ENCODE measurements at regions of chr4 and their contacts with region 1.

Region 1: GRCh38 chr4:83503974-83504373 is 19.1 kb upstream of the ABRAXAS1 start:
- DNase-seq: peak; percentile 48
- ATAC-seq: no peak
- H3K4me3 Mint-ChIP-seq: no peak overlapping the region
- H3K27ac Mint-ChIP-seq: peak overlapping the region; percentile 30
- H3K4me1 Mint-ChIP-seq: peaks cover 15% of the 10 kb centered on the region
- H3K27me3 Mint-ChIP-seq: no peaks in the 10 kb centered on the region

Region 2: DNA sequence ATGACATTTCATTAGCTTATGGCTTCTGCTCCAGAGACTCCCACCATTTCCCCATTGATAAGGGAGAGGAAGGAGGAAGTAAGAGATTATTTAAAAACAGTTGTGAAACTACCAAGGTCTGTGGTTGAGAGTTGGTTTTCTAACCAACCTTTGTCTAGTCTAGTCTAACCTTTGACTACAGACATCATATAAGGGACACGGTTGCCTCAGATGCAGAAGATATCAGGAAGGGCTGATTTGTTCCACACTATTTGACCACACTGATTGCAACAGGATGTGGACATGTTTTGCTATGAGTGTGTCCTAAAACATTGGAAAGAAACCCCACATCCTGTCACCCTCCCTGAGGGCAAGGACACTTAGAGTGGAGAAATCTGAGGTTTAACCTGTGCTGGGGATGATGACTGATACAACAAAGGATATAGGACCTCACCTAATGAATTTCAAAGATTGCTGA is 272.3 kb before region 1 on chr4:
- CTCF ChIA-PET with region 1: no interaction called
- POLR2A ChIA-PET with region 1: no interaction called
- DNase-seq: peak; percentile 75
- ATAC-seq: peak; percentile 84
- H3K4me3 Mint-ChIP-seq: peak overlapping the region; percentile 24
- H3K27ac Mint-ChIP-seq: peak overlapping the region; percentile 65
- H3K4me1 Mint-ChIP-seq: peaks cover 66% of the 10 kb centered on the region
- H3K27me3 Mint-ChIP-seq: no peaks in the 10 kb centered on the region

Region 3: GRCh38 chr4:83436680-83437079 is 67.3 kb before region 1 on chr4:
- CTCF ChIA-PET with region 1: no interaction called
- POLR2A ChIA-PET with region 1: no interaction called
- DNase-seq: no peak
- ATAC-seq: no peak
- H3K4me3 Mint-ChIP-seq: no peak overlapping the region
- H3K27ac Mint-ChIP-seq: no peak overlapping the region
- H3K4me1 Mint-ChIP-seq: no peaks in the 10 kb centered on the region
- H3K27me3 Mint-ChIP-seq: no peaks in the 10 kb centered on the region

Region 4: GRCh38 chr4:83516042-83516772 is 12.2 kb after region 1 on chr4:
- CTCF ChIA-PET with region 1: no interaction called
- POLR2A ChIA-PET with region 1: no interaction called
- DNase-seq: no peak
- ATAC-seq: no peak
- H3K4me3 Mint-ChIP-seq: no peak overlapping the region
- H3K27ac Mint-ChIP-seq: no peak overlapping the region
- H3K4me1 Mint-ChIP-seq: no peaks in the 10 kb centered on the region
- H3K27me3 Mint-ChIP-seq: no peaks in the 10 kb centered on the region

Region 5: GRCh38 chr4:83582289-83582769 is 78.4 kb after region 1 on chr4:
- CTCF ChIA-PET with region 1: interaction called, 12 read pairs
- POLR2A ChIA-PET with region 1: no interaction called
- DNase-seq: no peak
- ATAC-seq: no peak
- H3K4me3 Mint-ChIP-seq: no peak overlapping the region
- H3K27ac Mint-ChIP-seq: no peak overlapping the region
- H3K4me1 Mint-ChIP-seq: no peaks in the 10 kb centered on the region
- H3K27me3 Mint-ChIP-seq: peaks cover 6% of the 10 kb centered on the region

Region 6: DNA sequence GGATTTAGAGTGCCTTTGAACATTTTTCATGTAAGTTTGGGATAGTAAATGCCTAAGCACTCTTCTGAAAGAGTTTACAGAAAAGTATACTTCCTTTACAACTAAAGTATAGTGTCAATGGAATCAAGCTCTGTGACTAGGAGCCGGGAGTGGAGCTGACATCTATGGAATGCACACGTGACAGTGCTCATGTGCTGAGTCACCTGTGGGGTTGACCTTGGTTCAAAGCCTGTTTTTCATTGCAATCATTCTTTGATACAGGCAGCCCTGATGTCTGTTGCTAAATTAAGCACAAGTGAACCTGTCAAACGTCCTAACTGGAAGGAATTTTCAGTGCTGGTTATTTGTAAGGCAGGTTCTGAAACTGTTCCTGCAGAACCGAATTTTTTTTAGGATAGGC is 114.5 kb after region 1 on chr4:
- CTCF ChIA-PET with region 1: no interaction called
- POLR2A ChIA-PET with region 1: no interaction called
- DNase-seq: no peak
- ATAC-seq: no peak
- H3K4me3 Mint-ChIP-seq: no peak overlapping the region
- H3K27ac Mint-ChIP-seq: no peak overlapping the region
- H3K4me1 Mint-ChIP-seq: peaks cover 6% of the 10 kb centered on the region
- H3K27me3 Mint-ChIP-seq: peaks cover 16% of the 10 kb centered on the region

Region 7: GRCh38 chr4:83629945-83630721 is 126.2 kb after region 1 on chr4:
- CTCF ChIA-PET with region 1: interaction called, 12 read pairs
- POLR2A ChIA-PET with region 1: no interaction called
- DNase-seq: no peak
- ATAC-seq: no peak
- H3K4me3 Mint-ChIP-seq: no peak overlapping the region
- H3K27ac Mint-ChIP-seq: no peak overlapping the region
- H3K4me1 Mint-ChIP-seq: no peaks in the 10 kb centered on the region
- H3K27me3 Mint-ChIP-seq: peaks cover 12% of the 10 kb centered on the region

Measured in activated CD8-positive, alpha-beta T cell treated with anti-CD3 and anti-CD28 coated beads, Interleukin-2, amount 10 ng/mL, durations not matched to agents 7 days and 5 days (primary cell).